SK-N-SH (cell line): ENCODE measurements at regions of chr5 and their contacts with region 1.

Region 1: DNA sequence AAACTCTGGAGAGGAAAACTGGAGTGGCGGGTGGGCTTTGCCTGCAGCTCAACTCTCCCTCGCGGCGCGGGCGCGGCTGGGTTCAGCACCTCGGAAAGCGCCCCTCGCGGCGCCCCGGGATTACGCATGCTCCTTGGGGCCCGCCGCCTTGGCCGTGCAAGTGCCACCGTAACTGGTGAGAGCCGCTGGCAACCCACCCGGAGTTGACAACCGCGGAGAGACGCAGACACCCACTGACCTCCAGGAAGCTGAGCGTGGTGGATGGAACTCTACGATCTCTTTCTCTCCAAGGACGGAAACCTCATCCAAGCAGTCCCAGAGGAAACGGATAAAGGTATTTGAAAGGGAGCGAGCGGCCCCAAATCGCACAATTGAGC is 194 bp upstream of the RXFP3 start:
- DNase-seq: peak; percentile 67
- H3K4me3 ChIP-seq: peak overlapping the region; percentile 37 to 60
- H3K27ac ChIP-seq: no peak overlapping the region
- H3K4me1 ChIP-seq: peaks cover 0 to 6% of the 10 kb centered on the region in 2 experiments; a peak in 1 of 4 replicates
- H3K27me3 ChIP-seq: peaks cover 46% of the 10 kb centered on the region
- CTCF ChIP-seq: peak; percentile 14
- EP300 ChIP-seq: no peak
- RAD21 ChIP-seq: no peak

Region 2: GRCh38 chr5:33433303-33434240 is 502.4 kb before region 1 on chr5:
- CTCF ChIA-PET with region 1: interaction called, 34 read pairs
- POLR2A ChIA-PET with region 1: no interaction called
- DNase-seq: no peak
- H3K4me3 ChIP-seq: no peak overlapping the region
- H3K27ac ChIP-seq: no peak overlapping the region
- H3K4me1 ChIP-seq: no peaks in the 10 kb centered on the region
- H3K27me3 ChIP-seq: no peaks in the 10 kb centered on the region
- CTCF ChIP-seq: no peak
- EP300 ChIP-seq: no peak
- RAD21 ChIP-seq: no peak

Region 3: GRCh38 chr5:33440482-33441240 is 495.3 kb before region 1 on chr5 and contains the start of gene TARS1:
- CTCF ChIA-PET with region 1: interaction called, 34 read pairs
- POLR2A ChIA-PET with region 1: no interaction called
- DNase-seq: peak; percentile 91
- H3K4me3 ChIP-seq: peak within 1 kb of the TSS; percentile 90 to 94
- H3K27ac ChIP-seq: peak within 1 kb of the TSS; percentile 99
- H3K4me1 ChIP-seq: peaks cover 8 to 10% of the 10 kb centered on the region in 2 experiments; a peak in 3 of 4 replicates
- H3K27me3 ChIP-seq: no peaks in the 10 kb centered on the region
- CTCF ChIP-seq: no peak
- EP300 ChIP-seq: peak in 1 of 2 experiments; percentile 47; a peak in 1 of 4 replicates
- RAD21 ChIP-seq: no peak
- polyA plus RNA-seq, gene TARS1: 58.4 and 74.1 TPM in 2 replicates

Region 4: DNA sequence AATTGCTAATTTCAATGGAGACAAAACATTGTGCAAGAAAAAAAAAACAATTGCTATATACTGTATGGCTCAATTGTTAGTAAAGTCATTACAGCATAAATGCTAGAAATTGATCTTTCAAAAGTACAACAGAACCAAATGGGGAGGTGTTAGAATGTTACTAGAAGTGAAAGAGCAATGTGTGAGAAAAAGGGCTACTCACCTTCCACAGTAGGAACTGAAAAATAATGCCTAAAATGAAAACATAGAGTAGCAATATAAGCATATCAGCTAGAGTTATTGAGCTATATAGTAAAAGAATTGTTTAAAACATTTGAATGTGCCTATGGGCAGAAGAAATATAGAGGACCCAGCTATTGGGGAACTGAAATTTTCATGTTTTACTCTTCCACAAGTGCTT is 10.7 kb before region 1 on chr5:
- CTCF ChIA-PET with region 1: interaction called, 36 read pairs
- POLR2A ChIA-PET with region 1: no interaction called
- DNase-seq: no peak
- H3K4me3 ChIP-seq: no peak overlapping the region
- H3K27ac ChIP-seq: no peak overlapping the region
- H3K4me1 ChIP-seq: no peaks in the 10 kb centered on the region
- H3K27me3 ChIP-seq: no peaks in the 10 kb centered on the region; the same call in 1 of the 2 replicates
- CTCF ChIP-seq: no peak
- EP300 ChIP-seq: no peak
- RAD21 ChIP-seq: no peak

Region 5: DNA sequence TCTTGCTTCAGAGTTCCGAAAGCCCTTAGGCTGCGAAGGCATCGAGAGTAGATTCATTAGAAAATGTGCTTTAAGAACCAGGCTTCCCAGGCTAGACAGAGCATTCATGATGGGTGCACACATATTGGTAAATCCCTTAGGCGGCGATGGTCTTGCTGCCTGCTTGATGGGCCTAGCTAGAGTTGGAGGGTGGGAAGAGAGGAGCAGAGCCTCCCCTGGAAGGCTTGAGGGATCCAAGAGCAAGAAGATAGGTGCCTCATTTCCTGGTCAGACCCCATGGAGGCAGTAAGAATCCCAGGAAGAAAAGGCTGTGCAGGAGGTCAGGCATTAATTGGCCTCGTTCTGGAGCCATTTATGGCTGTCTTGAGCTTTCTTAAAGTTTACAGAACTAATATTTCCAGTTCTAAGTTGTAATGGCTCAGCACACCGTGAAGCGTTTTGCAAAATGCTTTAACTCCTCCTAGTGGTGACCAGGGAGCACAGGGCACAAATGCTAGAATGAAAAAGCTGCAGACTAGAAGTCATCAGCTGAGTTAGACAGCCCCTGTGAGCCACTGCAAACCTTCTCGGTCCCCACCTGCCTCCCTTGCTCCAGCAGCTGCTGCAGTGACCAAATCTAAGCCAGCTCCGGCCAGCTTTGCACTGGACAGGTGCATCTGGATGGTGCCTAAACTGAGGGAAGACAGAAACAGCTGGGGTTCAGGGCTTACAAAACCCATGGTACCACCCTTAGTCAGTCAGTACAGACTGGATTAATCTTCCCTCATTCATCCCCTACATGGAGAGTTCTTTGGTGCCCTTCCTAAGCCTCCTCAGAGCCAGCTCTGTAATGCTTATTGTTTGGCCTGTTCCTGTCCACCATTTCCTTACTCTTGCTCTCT is 33.8 kb after region 1 on chr5:
- CTCF ChIA-PET with region 1: interaction called, 11 read pairs
- POLR2A ChIA-PET with region 1: no interaction called
- DNase-seq: peak; percentile 32
- H3K4me3 ChIP-seq: no peak overlapping the region; a peak in 1 of 4 replicates
- H3K27ac ChIP-seq: no peak overlapping the region
- H3K4me1 ChIP-seq: peaks cover 0 to 7% of the 10 kb centered on the region in 2 experiments; a peak in 1 of 4 replicates
- H3K27me3 ChIP-seq: no peaks in the 10 kb centered on the region
- CTCF ChIP-seq: peak; percentile 68
- EP300 ChIP-seq: no peak
- RAD21 ChIP-seq: peak; percentile 66